Naive thymus-derived CD4-positive, alpha-beta T cell (primary cell): ENCODE measurements at regions of chr12 and their contacts with region 1.

Region 1: GRCh38 chr12:124863416-124864325 is at the start of gene SCARB1:
- DNase-seq: peak; percentile 60 to 84 (median 72)
- ATAC-seq: peak; percentile 95
- H3K4me3 ChIP-seq: peak within 1 kb of the TSS; percentile 74
- H3K4me3 Mint-ChIP-seq: peak within 1 kb of the TSS; percentile 70 to 94 (median 81)
- H3K27ac ChIP-seq: peak within 1 kb of the TSS; percentile 58
- H3K27ac Mint-ChIP-seq: peak within 1 kb of the TSS; percentile 66 to 94 (median 83)
- H3K4me1 ChIP-seq: no peaks in the 10 kb centered on the region
- H3K4me1 Mint-ChIP-seq: peaks cover 9 to 25% (median 14%) of the 10 kb centered on the region in 7 donors
- H3K27me3 ChIP-seq: no peaks in the 10 kb centered on the region
- H3K27me3 Mint-ChIP-seq: peaks cover 0 to 8% (median 3%) of the 10 kb centered on the region in 5 donors
- total RNA-seq, gene SCARB1: 2.5 to 7.1 (median 4.3) TPM

Region 2: DNA sequence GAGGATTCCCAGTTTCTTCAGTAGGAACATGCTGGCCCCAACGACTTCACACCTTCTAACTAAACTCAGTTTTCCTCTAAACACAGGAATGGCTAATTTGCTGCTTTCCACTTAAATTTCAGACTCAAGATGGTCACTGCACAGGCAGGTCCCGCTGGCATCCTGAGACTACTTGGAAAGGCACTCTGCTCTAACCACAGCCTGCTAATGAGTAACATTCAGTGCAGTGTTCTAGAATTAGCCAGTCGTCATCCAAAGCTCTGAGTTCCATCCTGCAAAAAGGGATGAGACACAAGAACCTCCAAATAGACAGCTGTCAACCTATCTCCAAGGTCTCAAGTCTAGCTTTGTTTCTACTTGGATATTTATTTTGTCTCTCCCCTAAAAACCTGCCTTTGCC is 897.1 kb before region 1 on chr12:
- CTCF ChIA-PET with region 1: no interaction called
- POLR2A ChIA-PET with region 1: no interaction called
- intact Hi-C with region 1: loop called in 1 of 2 experiments (anchors 10 kb)
- DNase-seq: no peak
- ATAC-seq: no peak
- H3K4me3 ChIP-seq: no peak overlapping the region
- H3K4me3 Mint-ChIP-seq: no peak overlapping the region
- H3K27ac ChIP-seq: no peak overlapping the region
- H3K27ac Mint-ChIP-seq: no peak overlapping the region
- H3K4me1 ChIP-seq: peaks cover 0 to 7% of the 10 kb centered on the region in 2 donors
- H3K4me1 Mint-ChIP-seq: peaks cover 5 to 56% (median 30%) of the 10 kb centered on the region in 7 donors
- H3K27me3 ChIP-seq: no peaks in the 10 kb centered on the region
- H3K27me3 Mint-ChIP-seq: peaks cover 0 to 9% (median 0%) of the 10 kb centered on the region in 5 donors

Region 3: GRCh38 chr12:124273630-124274029 is 590.0 kb before region 1 on chr12:
- CTCF ChIA-PET with region 1: no interaction called
- POLR2A ChIA-PET with region 1: no interaction called
- intact Hi-C with region 1: no loop called
- DNase-seq: no peak
- ATAC-seq: peak; percentile 69
- H3K4me3 ChIP-seq: no peak overlapping the region
- H3K4me3 Mint-ChIP-seq: no peak overlapping the region
- H3K27ac ChIP-seq: no peak overlapping the region
- H3K27ac Mint-ChIP-seq: no peak overlapping the region
- H3K4me1 ChIP-seq: no peaks in the 10 kb centered on the region
- H3K4me1 Mint-ChIP-seq: peaks cover 0 to 6% (median 0%) of the 10 kb centered on the region in 7 donors
- H3K27me3 ChIP-seq: no peaks in the 10 kb centered on the region
- H3K27me3 Mint-ChIP-seq: peaks cover 0 to 29% (median 15%) of the 10 kb centered on the region in 5 donors

Region 4: GRCh38 chr12:124898200-124898922 is 34.7 kb after region 1 on chr12:
- CTCF ChIA-PET with region 1: no interaction called
- POLR2A ChIA-PET with region 1: no interaction called
- intact Hi-C with region 1: loop called in 1 of 2 experiments (anchors 1 kb)
- DNase-seq: peak in 8 of 9 donors; percentile 53 to 81 (median 72)
- ATAC-seq: peak; percentile 98
- H3K4me3 ChIP-seq: no peak overlapping the region
- H3K4me3 Mint-ChIP-seq: peak overlapping the region in 8 of 10 donors; percentile 23 to 70 (median 48)
- H3K27ac ChIP-seq: no peak overlapping the region
- H3K27ac Mint-ChIP-seq: peak overlapping the region in 3 of 9 donors; percentile 36 to 68 (median 38)
- H3K4me1 ChIP-seq: no peaks in the 10 kb centered on the region
- H3K4me1 Mint-ChIP-seq: peaks cover 6 to 20% (median 13%) of the 10 kb centered on the region in 7 donors
- H3K27me3 ChIP-seq: no peaks in the 10 kb centered on the region
- H3K27me3 Mint-ChIP-seq: peaks cover 0 to 2% (median 0%) of the 10 kb centered on the region in 5 donors

Region 5: DNA sequence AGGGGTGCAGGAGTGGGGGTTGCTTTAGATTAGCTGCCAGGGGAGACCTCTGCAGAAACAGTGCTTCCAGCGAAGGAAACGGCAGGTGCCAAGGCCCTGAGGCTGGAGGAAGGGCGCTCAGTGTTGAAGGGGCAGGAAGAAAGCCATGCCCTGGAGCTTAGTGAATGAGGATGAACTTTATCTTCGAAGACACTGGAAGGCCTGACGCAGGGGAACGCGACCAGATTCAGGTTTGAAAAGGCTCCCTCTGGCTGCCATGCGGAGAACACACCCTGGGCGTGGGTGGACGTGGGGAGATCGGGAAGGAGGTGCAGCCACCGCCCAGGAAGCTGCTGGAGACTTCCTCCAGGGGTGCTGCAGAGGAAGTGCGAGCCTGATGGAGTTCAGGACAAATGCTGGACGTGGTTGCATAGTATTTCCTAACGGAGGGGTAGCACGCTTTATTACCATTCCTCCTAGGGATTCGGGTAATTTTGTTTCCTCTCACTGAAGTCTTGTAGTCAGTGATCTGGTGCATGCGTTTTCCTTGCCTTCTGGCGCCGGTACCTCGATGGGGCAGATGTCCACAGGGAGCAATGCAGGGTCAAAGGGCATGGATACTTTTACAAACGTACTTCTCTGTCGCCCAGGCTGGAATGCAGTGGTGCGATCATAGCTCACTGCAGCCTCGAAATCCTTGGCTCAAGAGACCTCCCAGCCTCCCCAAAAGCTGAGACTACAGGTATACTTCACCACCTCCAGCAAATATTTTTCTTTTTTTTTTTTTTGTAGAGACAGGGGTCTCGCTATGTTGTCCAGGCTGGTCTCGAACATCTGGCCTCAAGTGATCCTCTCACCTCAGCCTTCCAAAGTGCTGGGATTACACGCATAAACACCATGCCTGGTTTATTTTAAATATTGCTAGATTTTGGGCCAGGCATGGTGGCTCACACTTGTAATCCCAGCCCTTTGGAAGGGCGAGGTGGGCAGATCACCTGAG is 77.2 kb after region 1 on chr12:
- CTCF ChIA-PET with region 1: no interaction called
- POLR2A ChIA-PET with region 1: no interaction called
- intact Hi-C with region 1: loop called (anchors 2 to 5 kb)
- DNase-seq: peak; percentile 48 to 85 (median 78)
- ATAC-seq: peak; percentile 74
- H3K4me3 ChIP-seq: peak overlapping the region; percentile 97
- H3K4me3 Mint-ChIP-seq: no peak overlapping the region
- H3K27ac ChIP-seq: peak overlapping the region; percentile 66
- H3K27ac Mint-ChIP-seq: no peak overlapping the region
- H3K4me1 ChIP-seq: peaks cover 19 to 26% of the 10 kb centered on the region in 2 donors
- H3K4me1 Mint-ChIP-seq: peaks cover 0 to 22% (median 0%) of the 10 kb centered on the region in 7 donors
- H3K27me3 ChIP-seq: no peaks in the 10 kb centered on the region
- H3K27me3 Mint-ChIP-seq: no peaks in the 10 kb centered on the region

Region 6: GRCh38 chr12:125065021-125065795 is 201.5 kb after region 1 on chr12 and contains the start of gene AACS:
- CTCF ChIA-PET with region 1: no interaction called
- POLR2A ChIA-PET with region 1: interaction called, 4 read pairs
- intact Hi-C with region 1: loop called in 1 of 2 experiments (anchors 1 kb)
- DNase-seq: peak; percentile 50 to 81 (median 69)
- ATAC-seq: peak; percentile 99
- H3K4me3 ChIP-seq: peak within 1 kb of the TSS; percentile 69
- H3K4me3 Mint-ChIP-seq: peak within 1 kb of the TSS; percentile 72 to 92 (median 86)
- H3K27ac ChIP-seq: peak within 1 kb of the TSS; percentile 83
- H3K27ac Mint-ChIP-seq: peak within 1 kb of the TSS; percentile 42 to 88 (median 64)
- H3K4me1 ChIP-seq: no peaks in the 10 kb centered on the region
- H3K4me1 Mint-ChIP-seq: peaks cover 9 to 25% (median 20%) of the 10 kb centered on the region in 7 donors
- H3K27me3 ChIP-seq: no peaks in the 10 kb centered on the region
- H3K27me3 Mint-ChIP-seq: peaks cover 0 to 21% (median 3%) of the 10 kb centered on the region in 5 donors
- total RNA-seq, gene AACS: 11.6 to 21.7 (median 14.8) TPM